Adrenal gland (tissue), 19 donors: ENCODE measurements at regions of chr18 and their contacts with region 1.

Region 1: DNA sequence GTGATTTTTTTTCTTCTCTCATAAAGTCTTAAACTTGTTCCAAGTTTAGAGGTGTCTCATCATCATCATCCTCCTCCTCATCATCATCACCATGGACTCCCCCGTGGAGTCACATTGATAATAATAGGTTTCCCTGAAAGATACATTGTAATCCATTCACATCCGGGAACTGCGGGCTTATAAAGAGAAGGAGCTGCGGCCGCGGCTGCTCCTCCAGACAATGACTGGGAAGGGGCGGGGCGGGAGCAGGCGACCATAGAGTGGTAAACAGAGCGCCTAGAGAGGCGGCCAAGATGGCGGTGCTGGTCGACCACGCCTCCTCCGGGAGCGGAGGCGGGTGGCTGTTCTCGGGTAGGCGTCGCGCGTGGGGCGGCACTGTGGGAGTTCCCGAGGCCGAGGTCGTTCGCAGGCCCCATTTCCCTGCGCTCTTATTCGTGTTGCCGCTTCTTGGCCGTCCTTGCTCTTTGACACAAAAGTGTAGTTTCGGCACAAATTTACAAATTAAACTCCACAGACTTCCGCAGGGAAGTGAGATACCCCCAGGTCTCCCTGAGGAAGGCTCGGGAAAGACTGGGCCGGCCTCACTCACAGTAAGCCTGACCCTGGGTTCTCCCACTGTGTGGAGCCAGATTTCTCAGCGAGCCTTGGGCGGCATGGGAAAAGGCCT is 1.8 kb upstream of the TCF4 start:
- DNase-seq: peak; percentile 96 to 99 (median 98)
- H3K4me3 ChIP-seq: peak overlapping the region in 2 of 4 donors; percentile 38 to 85
- H3K27ac ChIP-seq: peak overlapping the region in 4 of 5 donors; percentile 71 to 90 (median 82)
- H3K4me1 ChIP-seq: peaks cover 0 to 10% of the 10 kb centered on the region in 2 donors
- H3K27me3 ChIP-seq: no peaks in the 10 kb centered on the region
- CTCF ChIP-seq: no peak
- POLR2A ChIP-seq: peak; percentile 57 to 69

Region 2: DNA sequence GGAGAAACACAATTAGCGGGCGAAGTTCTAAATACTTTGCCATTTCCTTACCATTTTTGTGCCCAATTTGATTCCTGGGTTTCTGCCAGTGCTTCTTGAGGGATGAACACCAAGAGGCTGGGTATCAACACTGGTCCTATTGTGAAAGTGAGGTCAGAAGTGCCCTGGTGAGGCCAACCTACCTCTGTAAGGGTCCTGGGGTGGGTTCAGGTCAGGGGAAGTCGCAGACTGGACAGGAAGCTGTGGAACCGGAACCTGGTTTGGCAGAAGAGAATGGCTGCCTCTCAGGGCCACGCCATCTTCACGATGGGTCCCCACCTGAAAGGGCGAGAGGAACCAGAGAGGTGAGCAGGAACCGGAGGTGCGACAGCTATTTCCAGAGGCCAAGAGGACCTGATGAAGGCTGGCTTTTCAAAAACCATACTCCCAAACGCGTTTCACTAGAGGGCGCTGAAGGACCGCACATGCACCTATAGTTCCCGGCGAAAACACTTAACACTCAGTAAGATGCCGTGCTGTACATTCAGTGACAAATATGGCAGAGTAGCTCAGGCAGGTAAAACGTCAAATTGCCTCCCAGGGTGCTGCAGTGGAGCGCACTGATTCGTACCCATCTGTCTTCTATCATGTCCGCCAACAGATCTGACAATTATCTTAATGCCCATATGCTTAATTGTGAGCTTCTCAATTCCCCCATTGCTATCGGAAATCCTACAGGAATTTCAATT is 355.2 kb before region 1 on chr18:
- intact Hi-C with region 1: loop called in 1 of 2 experiments (anchors 10 kb)
- DNase-seq: peak; percentile 67 to 95 (median 82)
- H3K4me3 ChIP-seq: no peak overlapping the region
- H3K27ac ChIP-seq: peak overlapping the region in 2 of 5 donors; percentile 6 to 20
- H3K4me1 ChIP-seq: peaks cover 6 to 26% of the 10 kb centered on the region in 2 donors
- H3K27me3 ChIP-seq: no peaks in the 10 kb centered on the region
- CTCF ChIP-seq: peak; percentile 56 to 88 (median 84)
- POLR2A ChIP-seq: no peak

Region 3: DNA sequence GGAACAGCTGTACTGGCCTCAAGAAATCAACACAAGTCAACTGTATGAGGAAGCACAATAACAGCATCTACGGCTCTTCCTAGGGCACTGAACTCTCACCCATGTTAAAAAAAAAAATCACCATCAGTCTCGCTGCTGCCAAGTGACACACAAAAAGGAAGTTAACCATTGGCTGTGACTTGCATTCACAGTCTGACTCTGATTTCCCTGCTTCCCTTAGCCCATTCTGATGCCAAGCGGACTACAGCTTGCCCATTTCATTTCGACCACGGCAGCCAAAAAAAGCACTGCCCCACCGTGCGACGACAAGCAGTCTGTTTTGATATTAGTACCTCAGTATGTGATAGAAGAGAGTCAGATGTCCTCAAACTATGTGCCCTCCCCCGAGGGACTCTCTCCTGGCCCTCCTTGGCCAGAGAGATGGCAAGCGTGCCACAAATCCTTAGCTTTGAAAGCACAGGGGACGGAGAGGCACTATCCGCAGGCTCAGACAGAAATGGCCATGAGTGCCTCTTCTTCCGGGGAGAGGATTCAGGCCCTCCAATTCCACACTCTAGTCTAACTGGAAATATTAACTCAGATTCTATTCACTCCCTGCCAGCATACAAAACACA is 251.7 kb before region 1 on chr18:
- intact Hi-C with region 1: loop called in 1 of 2 experiments (anchors 5 kb)
- DNase-seq: peak in 4 of 7 donors; percentile 22 to 67 (median 30)
- H3K4me3 ChIP-seq: peak overlapping the region in 1 of 4 donors; percentile 4
- H3K27ac ChIP-seq: peak overlapping the region in 3 of 5 donors; percentile 68 to 85 (median 77)
- H3K4me1 ChIP-seq: peaks cover 0 to 29% of the 10 kb centered on the region in 2 donors
- H3K27me3 ChIP-seq: no peaks in the 10 kb centered on the region
- CTCF ChIP-seq: no peak
- POLR2A ChIP-seq: no peak

Region 4: GRCh38 chr18:55415258-55415871 is 174.4 kb before region 1 on chr18:
- intact Hi-C with region 1: loop called in 1 of 2 experiments (anchors 5 kb)
- DNase-seq: peak; percentile 78 to 95 (median 89)
- H3K4me3 ChIP-seq: no peak overlapping the region
- H3K27ac ChIP-seq: no peak overlapping the region
- H3K4me1 ChIP-seq: peaks cover 0 to 4% of the 10 kb centered on the region in 2 donors
- H3K27me3 ChIP-seq: no peaks in the 10 kb centered on the region
- CTCF ChIP-seq: peak; percentile 74 to 97 (median 88)
- POLR2A ChIP-seq: no peak